ENCODE measurements at regions of chr3 and their contacts with region 1.

Region 1: DNA sequence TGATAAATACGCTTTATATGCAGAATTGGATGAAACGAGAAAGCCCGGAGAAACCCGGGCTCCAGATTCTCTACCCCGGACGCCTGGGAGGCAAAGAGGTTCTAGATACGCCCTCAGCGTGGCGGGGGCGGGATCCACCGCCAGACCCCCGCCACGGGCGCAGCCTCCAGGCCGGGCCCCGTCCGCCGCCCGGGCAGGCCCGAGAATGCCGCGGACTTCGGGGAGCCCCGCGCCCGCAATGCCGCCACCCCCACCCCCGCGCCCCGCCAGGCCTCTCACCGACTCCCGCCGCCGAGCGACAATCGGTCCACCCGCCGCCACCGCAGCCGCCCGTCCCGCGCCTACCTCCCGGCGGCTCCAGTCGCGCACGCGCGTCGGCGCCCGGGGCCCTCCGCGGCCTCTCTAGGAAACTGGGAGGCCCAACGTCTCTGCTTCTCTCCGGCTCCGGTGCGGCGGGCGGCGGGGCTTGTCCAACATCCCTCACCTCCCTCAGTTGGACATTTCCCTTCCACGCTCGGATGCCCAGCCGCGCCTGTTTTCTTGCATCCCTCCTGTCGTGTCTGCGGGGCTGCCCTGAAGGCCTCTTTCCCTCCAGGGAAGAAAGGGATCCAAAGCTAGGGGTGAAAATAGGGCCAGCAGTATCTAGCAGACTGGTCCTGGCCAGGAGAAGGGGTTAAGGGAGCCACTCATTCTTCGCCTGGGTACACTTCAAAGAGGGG is at the start of gene ZNF445:
- DNase-seq: peak; percentile 72 to 85 (median 79)
- H3K4me3 ChIP-seq: peak within 1 kb of the TSS; percentile 60
- H3K27ac ChIP-seq: no peak within 1 kb of the TSS
- H3K4me1 ChIP-seq: peaks cover 1% of the 10 kb centered on the region
- H3K27me3 ChIP-seq: no peaks in the 10 kb centered on the region
- CTCF ChIP-seq: no peak
- EP300 ChIP-seq: no peak
- POLR2A ChIP-seq: no peak
- total RNA-seq, gene ZNF445: 5.2 to 30.3 (median 25.9) TPM

Region 2: DNA sequence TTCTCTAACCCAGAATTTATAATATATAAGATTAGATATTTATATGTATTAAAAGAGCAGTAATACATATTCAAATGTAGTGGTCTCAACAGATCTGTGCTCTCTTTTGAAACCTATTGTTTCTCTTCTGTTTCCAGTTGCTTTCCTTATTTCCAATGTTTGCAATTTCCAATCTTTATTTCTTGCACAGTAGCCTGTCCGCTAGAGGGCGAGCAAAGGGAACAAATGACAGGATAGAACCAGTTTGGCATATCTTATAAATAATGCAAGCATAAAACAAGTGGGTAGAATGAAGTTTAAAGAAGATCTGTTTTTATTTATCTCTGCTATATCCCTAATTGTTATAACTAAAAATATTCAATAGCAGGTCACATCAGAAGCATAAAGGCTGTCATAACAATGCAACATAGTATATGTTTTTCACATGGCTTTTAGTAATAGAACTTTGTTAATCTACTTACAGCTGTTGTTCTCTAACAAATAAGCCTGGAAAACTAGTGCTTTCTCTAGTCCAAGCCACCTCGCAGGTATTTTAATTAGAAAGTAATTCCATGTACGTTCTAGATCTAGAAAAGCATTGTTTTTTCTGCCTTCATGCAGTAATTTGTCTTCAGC is 154.0 kb before region 1 on chr3:
- intact Hi-C with region 1: loop called in 1 of 4 experiments (anchors 10 kb)
- DNase-seq: peak; percentile 63 to 80 (median 74)
- H3K4me3 ChIP-seq: no peak overlapping the region
- H3K27ac ChIP-seq: no peak overlapping the region
- H3K4me1 ChIP-seq: no peaks in the 10 kb centered on the region
- H3K27me3 ChIP-seq: no peaks in the 10 kb centered on the region
- CTCF ChIP-seq: peak; percentile 55 to 73 (median 73)
- EP300 ChIP-seq: no peak
- POLR2A ChIP-seq: no peak

Region 3: GRCh38 chr3:44845528-44846520 is 368.4 kb after region 1 on chr3:
- intact Hi-C with region 1: no loop called
- DNase-seq: peak in 1 of 5 donors; percentile 15
- H3K4me3 ChIP-seq: no peak overlapping the region
- H3K27ac ChIP-seq: no peak overlapping the region
- H3K4me1 ChIP-seq: peaks cover 6% of the 10 kb centered on the region
- H3K27me3 ChIP-seq: no peaks in the 10 kb centered on the region
- CTCF ChIP-seq: no peak
- EP300 ChIP-seq: no peak
- POLR2A ChIP-seq: no peak